ENCODE measurements at regions of chr1 and their contacts with region 1.

Region 1: DNA sequence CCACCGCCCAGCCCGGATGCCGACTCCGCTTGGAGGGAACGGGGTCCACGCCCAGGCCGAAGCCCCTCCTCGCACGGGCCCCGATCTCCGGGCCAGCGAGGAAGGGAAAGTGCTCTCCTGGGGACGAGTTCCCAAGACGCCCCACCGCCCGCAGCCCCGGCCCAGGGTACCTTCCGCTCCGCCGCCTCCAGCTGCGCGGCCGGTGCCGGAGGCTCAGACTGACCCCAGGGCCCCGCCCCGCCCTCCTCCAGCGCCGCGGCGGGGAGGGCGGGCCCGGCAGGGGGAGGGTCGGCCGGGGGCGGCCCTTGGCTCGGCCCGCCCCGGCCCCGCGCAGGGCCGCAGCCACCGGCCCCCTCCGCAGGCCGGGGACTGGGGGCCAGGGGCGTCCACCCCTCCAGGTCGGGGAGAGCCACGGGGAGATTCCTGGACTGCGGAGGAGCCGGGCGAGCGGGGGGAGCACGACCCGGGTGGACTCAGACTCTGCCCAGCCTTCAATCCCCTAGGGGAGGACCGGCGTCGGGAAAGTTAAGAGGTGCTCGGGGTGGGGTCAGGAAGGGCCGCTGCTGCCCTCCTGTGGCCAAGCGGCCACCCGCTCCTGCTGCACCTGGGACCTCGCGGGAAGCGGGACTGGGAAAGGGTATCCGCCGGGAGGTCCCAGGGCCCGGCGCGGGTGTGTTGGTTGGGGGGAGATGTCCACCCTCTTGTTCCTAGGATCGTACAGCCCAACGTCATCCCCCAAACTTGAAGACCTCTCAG is at the start of gene RHOC:
- DNase-seq: peak; percentile 34
- H3K4me3 ChIP-seq: peak within 1 kb of the TSS; percentile 88
- CTCF ChIP-seq: peak; percentile 98

Region 2: DNA sequence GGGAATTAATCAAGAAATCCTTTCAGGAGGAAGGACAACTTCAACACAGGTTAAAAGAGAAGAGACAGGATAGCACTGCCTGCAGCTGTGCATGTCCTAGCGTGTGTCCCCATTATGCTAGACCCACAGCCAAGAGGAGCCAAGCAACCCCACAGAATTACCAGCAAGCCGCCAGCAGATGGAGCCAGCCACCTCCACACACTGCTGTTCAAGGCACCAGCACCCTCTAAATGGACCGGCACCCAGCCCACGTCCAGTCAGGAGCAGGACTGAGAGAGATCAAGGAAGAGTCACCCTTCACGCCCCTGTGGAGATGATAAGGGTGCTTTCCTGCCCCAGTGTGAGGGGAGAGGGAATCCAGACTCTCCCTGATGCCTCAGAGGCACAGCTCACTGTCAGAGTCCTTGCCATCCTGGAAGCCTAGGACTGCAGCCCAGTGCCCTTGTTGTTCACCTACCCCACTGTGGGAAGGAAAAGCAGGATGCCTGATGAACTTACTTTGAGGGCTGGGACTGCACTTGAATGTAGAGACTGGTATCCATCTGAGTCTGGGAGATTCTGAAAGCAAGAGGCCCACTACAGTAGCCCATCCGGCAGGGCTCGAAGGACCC is 348.2 kb before region 1 on chr1:
- CTCF ChIA-PET with region 1: interaction called, 21 read pairs
- POLR2A ChIA-PET with region 1: no interaction called
- DNase-seq: no peak
- H3K4me3 ChIP-seq: no peak overlapping the region
- CTCF ChIP-seq: peak; percentile 91

Region 3: DNA sequence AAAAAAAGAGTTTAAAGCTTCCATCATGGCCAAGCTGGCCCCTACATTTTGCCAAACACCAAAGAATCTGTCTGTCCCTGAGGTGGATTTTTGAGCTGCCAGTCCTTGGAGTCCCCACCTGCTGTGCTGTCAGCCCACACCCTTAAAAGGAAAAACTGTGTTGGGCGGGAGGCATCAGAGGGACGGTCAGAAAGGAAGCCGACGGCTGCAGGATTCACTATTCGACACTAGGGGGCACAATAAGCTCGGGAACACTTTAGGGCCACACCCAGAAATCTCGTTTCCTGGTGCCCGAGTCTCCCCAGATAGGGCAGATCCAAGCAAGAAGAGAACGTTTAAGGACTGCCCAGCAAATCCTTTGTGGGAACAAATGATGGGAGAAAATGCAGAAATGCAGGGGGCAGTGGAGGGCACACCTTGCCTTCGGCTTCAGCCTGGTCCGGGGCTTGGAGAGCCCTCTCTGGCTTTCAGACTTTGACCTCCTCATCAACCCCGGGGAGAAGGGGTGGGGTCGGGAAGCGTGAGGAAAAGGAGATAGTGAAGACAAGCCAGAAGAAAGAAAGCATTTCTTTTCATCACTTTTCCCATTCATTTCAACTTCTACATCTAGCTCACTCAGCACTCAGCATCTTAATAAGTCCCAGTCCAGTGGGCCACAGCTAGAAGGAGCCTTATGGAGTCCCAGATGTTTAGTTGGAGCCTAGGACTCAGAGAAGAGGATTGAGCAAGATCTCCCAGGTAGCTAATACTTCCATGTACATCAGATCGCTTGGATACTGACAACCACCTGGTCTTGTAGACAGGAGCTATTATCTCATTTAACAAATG is 316.1 kb before region 1 on chr1:
- CTCF ChIA-PET with region 1: interaction called, 62 read pairs
- POLR2A ChIA-PET with region 1: interaction called, 20 read pairs
- DNase-seq: peak; percentile 67
- H3K4me3 ChIP-seq: peak overlapping the region; percentile 50
- CTCF ChIP-seq: peak; percentile 79

Region 4: DNA sequence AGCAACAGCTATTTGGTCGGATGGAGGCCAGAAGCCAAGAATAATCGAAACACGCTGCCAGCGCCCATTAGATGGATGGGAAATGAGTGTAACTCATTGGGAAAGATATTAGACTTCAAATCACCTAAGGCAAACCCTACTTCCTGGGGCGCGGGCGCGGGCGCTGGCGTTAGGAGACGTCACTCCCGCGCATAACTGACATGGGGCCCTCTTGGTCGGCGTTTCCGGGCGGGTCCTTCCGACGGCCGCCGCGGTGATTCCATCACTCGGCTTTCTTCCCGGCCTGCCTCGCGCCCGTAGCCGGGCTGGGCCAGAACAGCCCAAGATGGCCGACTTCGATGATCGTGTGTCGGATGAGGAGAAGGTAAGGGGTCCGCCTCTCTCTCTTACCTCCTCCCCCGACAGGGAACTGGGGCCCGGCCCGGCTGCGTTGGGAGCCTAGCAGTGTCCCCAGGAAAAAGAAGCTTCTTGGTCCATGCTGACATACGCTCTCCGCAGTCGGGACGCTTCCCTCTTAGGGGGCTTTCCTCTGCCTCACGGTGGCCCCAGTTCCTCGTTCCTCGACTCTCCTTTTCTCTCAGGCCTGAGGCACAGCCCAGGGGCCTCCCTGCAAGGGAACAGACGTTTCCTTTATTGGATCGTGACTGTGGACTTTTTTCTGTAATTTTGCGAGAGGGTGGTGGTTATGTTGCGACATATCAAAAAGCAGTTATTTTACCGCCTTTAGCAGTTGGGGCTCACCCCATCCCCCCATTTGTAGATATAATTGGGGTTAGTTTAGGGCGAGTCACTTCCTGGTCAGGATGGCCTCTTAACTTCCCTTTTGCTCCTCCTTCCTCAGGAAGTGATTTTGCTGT is 87.3 kb before region 1 on chr1 and contains the start of gene CAPZA1:
- CTCF ChIA-PET with region 1: interaction called, 14 read pairs
- POLR2A ChIA-PET with region 1: interaction called, 8 read pairs
- DNase-seq: peak; percentile 59
- H3K4me3 ChIP-seq: peak within 1 kb of the TSS; percentile 100
- CTCF ChIP-seq: no peak

Region 5: DNA sequence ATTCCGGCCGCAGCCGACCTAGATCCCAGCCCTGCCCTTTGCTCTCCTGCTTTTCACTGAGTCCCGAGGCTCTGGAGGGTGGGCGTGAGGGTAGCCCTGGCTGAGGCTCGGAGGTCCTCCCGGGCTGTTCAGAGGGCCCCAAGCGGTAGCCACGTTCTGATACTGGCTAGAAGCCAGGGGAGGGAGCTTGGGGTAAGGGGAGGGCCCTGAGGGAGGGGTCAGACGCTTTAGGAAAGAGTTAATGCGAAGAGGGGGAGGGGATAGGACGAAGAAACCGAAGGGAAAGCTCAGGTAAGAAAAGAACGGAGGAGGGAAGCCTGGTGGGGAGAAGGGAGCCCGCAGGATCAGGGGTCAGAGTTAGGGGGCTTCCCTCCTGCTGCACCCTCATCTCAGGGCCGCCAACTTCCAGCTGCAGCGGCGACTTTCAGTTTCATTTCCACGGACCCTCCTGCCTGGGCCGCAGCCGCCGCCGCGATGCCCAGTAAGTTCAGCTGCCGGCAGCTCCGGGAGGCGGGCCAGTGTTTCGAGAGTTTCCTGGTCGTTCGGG is 32.6 kb before region 1 on chr1 and contains the start of gene MOV10:
- CTCF ChIA-PET with region 1: interaction called, 21 read pairs
- POLR2A ChIA-PET with region 1: interaction called, 21 read pairs
- DNase-seq: no peak
- H3K4me3 ChIP-seq: peak within 1 kb of the TSS; percentile 87
- CTCF ChIP-seq: no peak

Region 6: GRCh38 chr1:112803906-112804762 is 97.0 kb after region 1 on chr1:
- CTCF ChIA-PET with region 1: interaction called, 17 read pairs
- POLR2A ChIA-PET with region 1: no interaction called
- DNase-seq: no peak
- H3K4me3 ChIP-seq: no peak overlapping the region
- CTCF ChIP-seq: peak; percentile 89

Region 7: GRCh38 chr1:113057006-113057405 is 349.9 kb after region 1 on chr1:
- CTCF ChIA-PET with region 1: no interaction called
- POLR2A ChIA-PET with region 1: no interaction called
- DNase-seq: no peak
- H3K4me3 ChIP-seq: no peak overlapping the region
- CTCF ChIP-seq: no peak

Measured in AG04449 (cell line).